ENCODE measurements at regions of chr3 and their contacts with region 1.

Region 1: DNA sequence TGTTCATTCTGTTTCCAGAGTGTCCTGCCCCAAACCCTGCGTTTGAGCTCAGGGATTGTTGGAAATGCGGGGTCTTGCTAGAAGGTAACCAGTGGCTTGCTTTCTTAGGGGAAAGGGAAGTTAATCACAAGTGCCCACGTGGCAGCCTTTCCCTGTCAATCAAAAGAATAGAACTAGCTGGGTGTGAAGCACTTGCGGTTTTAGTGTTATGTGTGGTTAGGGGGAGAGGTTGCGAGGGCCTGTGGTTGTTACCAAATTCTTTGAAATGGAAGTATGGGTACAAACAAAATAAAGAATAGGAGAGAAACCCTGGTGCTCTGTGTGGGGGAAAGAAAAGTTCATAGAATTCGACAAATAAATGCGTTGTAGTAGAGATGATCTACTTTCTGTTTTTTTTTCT is 67.6 kb downstream of the FNDC3B start:
- DNase-seq: peak; percentile 83 to 84 (median 84)
- H3K4me3 ChIP-seq: peak overlapping the region; percentile 1 to 56
- H3K4me3 Mint-ChIP-seq: peak overlapping the region; percentile 76 to 91 (median 81)
- H3K27ac ChIP-seq: peak overlapping the region; percentile 42
- H3K27ac Mint-ChIP-seq: peak overlapping the region; percentile 88 to 97 (median 94)
- H3K4me1 ChIP-seq: peaks cover 82% of the 10 kb centered on the region
- H3K4me1 Mint-ChIP-seq: peaks cover 67 to 85% (median 78%) of the 10 kb centered on the region in 4 donors
- H3K27me3 ChIP-seq: no peaks in the 10 kb centered on the region
- H3K27me3 Mint-ChIP-seq: no peaks in the 10 kb centered on the region

Region 2: DNA sequence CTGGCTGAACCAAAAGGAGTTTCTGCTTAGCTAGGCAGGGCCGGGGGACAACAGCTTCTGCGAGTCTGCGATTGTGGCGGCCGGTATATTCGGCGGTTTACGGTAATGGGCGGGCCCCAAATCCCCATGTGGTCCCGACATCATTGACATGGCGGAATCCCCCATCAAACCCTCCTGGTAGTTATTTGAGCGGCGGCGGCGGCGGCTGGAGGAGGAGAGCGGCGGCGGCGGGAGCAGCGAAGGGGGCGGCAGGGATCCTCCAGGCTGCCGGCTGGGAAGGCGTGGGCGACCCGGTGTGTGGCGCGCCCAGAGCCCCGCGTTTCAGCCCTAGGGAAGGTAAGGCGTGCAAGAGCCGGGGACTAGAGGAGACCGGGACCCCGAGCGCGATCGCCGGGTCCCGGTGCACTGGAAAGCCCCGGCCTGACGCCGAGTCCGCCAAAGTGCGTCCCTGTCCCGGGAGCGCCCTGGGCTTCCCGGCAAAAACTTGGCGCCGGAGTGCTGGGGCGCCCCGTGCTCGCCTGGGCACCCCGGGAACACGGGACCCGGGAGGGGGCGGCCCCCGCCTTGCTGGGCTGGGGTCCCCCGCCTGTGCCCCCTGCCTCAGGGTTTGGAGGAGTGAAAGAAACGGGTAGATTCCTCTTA is 67.4 kb before region 1 on chr3 and contains the start of gene FNDC3B:
- CTCF ChIA-PET with region 1: interaction called, 21 read pairs
- POLR2A ChIA-PET with region 1: interaction called, 14 read pairs
- intact Hi-C with region 1: loop called (anchors 1 kb)
- DNase-seq: peak; percentile 90 to 93 (median 91)
- H3K4me3 ChIP-seq: peak within 1 kb of the TSS; percentile 61 to 62
- H3K4me3 Mint-ChIP-seq: peak within 1 kb of the TSS; percentile 94 to 99 (median 97)
- H3K27ac ChIP-seq: peak within 1 kb of the TSS; percentile 92
- H3K27ac Mint-ChIP-seq: peak within 1 kb of the TSS; percentile 94 to 99 (median 96)
- H3K4me1 ChIP-seq: peaks cover 29% of the 10 kb centered on the region
- H3K4me1 Mint-ChIP-seq: peaks cover 25 to 58% (median 37%) of the 10 kb centered on the region in 4 donors
- H3K27me3 ChIP-seq: no peaks in the 10 kb centered on the region
- H3K27me3 Mint-ChIP-seq: no peaks in the 10 kb centered on the region
- total RNA-seq, gene FNDC3B: 18.0 to 18.2 TPM

Region 3: GRCh38 chr3:172087602-172088580 is 19.1 kb before region 1 on chr3:
- CTCF ChIA-PET with region 1: interaction called, 6 read pairs
- POLR2A ChIA-PET with region 1: interaction called, 11 read pairs
- intact Hi-C with region 1: no loop called
- DNase-seq: no peak
- H3K4me3 ChIP-seq: no peak overlapping the region
- H3K4me3 Mint-ChIP-seq: peak overlapping the region in 7 of 8 donors; percentile 31 to 79 (median 61)
- H3K27ac ChIP-seq: no peak overlapping the region
- H3K27ac Mint-ChIP-seq: peak overlapping the region in 6 of 7 donors; percentile 41 to 81 (median 74)
- H3K4me1 ChIP-seq: peaks cover 18% of the 10 kb centered on the region
- H3K4me1 Mint-ChIP-seq: peaks cover 15 to 56% (median 34%) of the 10 kb centered on the region in 4 donors
- H3K27me3 ChIP-seq: no peaks in the 10 kb centered on the region
- H3K27me3 Mint-ChIP-seq: no peaks in the 10 kb centered on the region

Region 4: DNA sequence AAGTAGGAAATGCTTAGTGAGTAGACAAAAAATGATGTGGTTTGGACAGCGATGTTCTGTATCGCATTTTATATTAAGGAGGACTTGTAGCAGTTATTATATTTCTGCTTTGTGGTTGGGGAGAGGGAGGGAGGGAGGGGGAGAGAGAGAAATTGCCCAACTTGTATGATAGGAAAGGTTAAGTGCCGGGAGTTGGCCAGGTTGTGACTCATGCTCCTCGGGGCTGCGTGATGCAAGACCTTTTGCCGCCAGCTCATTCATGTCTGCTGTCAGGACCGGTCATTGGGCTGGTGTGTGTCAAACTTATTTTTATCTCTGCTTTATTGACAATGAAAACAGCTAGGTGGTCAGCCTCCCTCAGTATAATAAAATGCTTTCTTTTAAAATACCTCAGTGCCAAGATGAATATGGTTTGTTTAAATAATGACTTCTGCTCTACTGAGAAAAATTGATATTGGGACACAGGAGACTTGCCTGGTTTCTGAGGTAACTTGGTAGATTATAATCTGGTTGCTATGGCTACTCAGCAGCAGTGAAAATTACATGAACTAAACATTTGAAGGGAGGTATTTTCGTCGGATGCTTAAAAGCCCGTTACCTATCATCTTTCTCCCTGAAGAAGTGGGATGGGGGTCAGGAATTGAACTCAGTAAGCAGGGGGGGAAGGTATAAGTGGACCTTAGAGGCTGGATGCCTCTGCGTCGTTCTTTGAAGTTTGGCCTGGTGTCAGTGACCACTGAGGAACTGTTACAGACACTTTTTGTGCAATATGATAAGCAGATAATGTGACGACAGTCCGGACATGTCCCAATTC is 23.1 kb after region 1 on chr3:
- CTCF ChIA-PET with region 1: interaction called, 4 read pairs
- POLR2A ChIA-PET with region 1: interaction called, 37 read pairs
- intact Hi-C with region 1: loop called (anchors 1 kb)
- DNase-seq: peak; percentile 64 to 90 (median 72)
- H3K4me3 ChIP-seq: no peak overlapping the region
- H3K4me3 Mint-ChIP-seq: peak overlapping the region; percentile 55 to 81 (median 72)
- H3K27ac ChIP-seq: peak overlapping the region; percentile 46
- H3K27ac Mint-ChIP-seq: peak overlapping the region; percentile 88 to 99 (median 95)
- H3K4me1 ChIP-seq: peaks cover 57% of the 10 kb centered on the region
- H3K4me1 Mint-ChIP-seq: peaks cover 49 to 77% (median 56%) of the 10 kb centered on the region in 4 donors
- H3K27me3 ChIP-seq: no peaks in the 10 kb centered on the region
- H3K27me3 Mint-ChIP-seq: no peaks in the 10 kb centered on the region

Region 5: GRCh38 chr3:172332256-172333041 is 225.5 kb after region 1 on chr3:
- CTCF ChIA-PET with region 1: interaction called, 16 read pairs
- POLR2A ChIA-PET with region 1: no interaction called
- intact Hi-C with region 1: no loop called
- DNase-seq: peak; percentile 40 to 57 (median 47)
- H3K4me3 ChIP-seq: no peak overlapping the region
- H3K4me3 Mint-ChIP-seq: no peak overlapping the region
- H3K27ac ChIP-seq: no peak overlapping the region
- H3K27ac Mint-ChIP-seq: peak overlapping the region in 1 of 7 donors; percentile 15
- H3K4me1 ChIP-seq: no peaks in the 10 kb centered on the region
- H3K4me1 Mint-ChIP-seq: peaks cover 0 to 7% (median 3%) of the 10 kb centered on the region in 4 donors
- H3K27me3 ChIP-seq: no peaks in the 10 kb centered on the region
- H3K27me3 Mint-ChIP-seq: no peaks in the 10 kb centered on the region

Measured in CD4-positive, alpha-beta memory T cell (primary cell).